ENCODE measurements at regions of chr17 and their contacts with region 1.

Region 1: DNA sequence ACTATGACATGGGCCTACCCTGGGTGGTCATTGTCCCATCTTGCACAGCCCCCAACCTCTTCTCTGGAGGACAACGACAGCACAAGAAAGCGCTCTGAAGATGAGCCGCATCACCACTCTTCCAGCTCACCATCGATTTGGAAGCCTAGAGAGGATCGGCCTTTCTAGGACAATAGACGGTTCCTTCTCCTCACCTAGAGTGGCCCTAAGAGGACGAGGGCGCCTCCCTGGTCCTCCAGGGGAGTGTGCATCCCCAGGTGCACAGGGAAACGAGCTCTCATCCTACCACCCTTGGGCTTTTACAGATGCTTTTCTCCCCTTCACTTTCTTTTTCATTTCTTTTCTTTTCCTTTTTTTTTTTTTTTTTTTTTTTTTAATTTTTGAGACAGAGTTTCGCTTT is 20.3 kb upstream of the SLC52A1 start:
- DNase-seq: no peak
- ATAC-seq: no peak
- H3K4me3 ChIP-seq: no peak overlapping the region
- H3K27ac ChIP-seq: no peak overlapping the region
- H3K4me1 ChIP-seq: no peaks in the 10 kb centered on the region
- H3K27me3 ChIP-seq: peaks cover 0 to 3% (median 0%) of the 10 kb centered on the region in 9 donors
- CTCF ChIP-seq: no peak
- POLR2A ChIP-seq: no peak

Region 2: DNA sequence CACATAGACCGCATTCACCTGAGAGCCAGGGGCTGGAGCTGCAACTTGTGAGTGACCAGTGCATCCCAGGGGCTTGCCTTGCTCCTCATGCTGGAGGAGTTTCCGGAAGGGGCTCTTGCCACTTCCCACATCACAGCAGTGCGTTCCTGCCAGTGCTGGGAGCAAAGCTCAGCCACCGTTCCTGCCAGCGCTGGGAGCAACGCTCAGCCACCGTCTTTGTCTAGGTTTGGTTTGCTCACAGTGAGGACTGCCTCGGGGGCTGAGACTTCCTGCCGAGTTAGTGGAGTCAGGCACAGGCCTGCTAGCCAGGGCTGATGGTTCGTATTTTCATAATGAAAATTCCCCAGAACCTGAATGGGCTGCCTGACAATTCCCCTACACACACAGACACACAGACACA is 147.2 kb before region 1 on chr17:
- intact Hi-C with region 1: loop called in 5 of 10 experiments (anchors 5 to 10 kb)
- DNase-seq: no peak
- ATAC-seq: peak in 2 of 4 donors; percentile 41 to 48
- H3K4me3 ChIP-seq: no peak overlapping the region
- H3K27ac ChIP-seq: peak overlapping the region in 9 of 12 donors; percentile 1 to 75 (median 60)
- H3K4me1 ChIP-seq: peaks cover 0 to 20% (median 10%) of the 10 kb centered on the region in 12 donors
- H3K27me3 ChIP-seq: no peaks in the 10 kb centered on the region
- CTCF ChIP-seq: no peak
- POLR2A ChIP-seq: no peak

Region 3: GRCh38 chr17:4950075-4950745 is 105.3 kb before region 1 on chr17:
- intact Hi-C with region 1: no loop called
- DNase-seq: peak; percentile 75 to 91 (median 84)
- ATAC-seq: peak in 3 of 4 donors; percentile 10 to 52 (median 36)
- H3K4me3 ChIP-seq: peak overlapping the region; percentile 42 to 100 (median 98)
- H3K27ac ChIP-seq: peak overlapping the region; percentile 96 to 100 (median 99)
- H3K4me1 ChIP-seq: peaks cover 7 to 69% (median 34%) of the 10 kb centered on the region in 12 donors
- H3K27me3 ChIP-seq: no peaks in the 10 kb centered on the region
- CTCF ChIP-seq: no peak
- POLR2A ChIP-seq: peak in 1 of 2 donors; percentile 3

Region 4: DNA sequence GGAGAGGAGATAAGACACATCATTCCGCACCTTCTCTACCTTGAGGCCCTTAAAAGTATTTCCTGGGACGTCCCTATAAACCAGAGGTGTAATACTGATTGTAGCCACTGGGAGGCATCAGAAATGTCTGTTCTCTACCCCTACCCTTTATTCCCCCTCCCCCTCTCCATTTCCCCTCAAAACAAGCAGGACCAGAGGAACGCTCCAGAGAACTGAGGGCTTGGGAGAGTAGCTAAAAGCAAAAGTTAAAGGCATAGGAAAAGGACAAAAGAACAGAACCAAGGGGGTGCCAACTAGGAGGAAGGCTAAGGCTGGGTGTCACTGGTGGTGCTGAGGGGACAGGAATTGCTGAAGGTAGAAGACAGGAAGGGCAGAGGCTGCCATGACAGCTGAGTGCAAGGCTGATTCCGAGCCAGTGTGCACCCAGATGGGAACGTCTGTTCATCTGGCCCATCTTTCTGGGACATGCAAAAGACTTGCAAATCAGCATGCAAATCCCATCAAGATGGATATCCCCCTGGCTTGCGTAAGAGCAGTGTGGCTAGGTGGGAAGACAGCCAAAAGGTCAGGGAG is 74.8 kb before region 1 on chr17:
- intact Hi-C with region 1: loop called in 7 of 10 experiments (anchors 5 kb)
- DNase-seq: no peak
- ATAC-seq: peak in 3 of 4 donors; percentile 48 to 59 (median 53)
- H3K4me3 ChIP-seq: no peak overlapping the region
- H3K27ac ChIP-seq: no peak overlapping the region
- H3K4me1 ChIP-seq: peaks cover 0 to 43% (median 1%) of the 10 kb centered on the region in 12 donors
- H3K27me3 ChIP-seq: no peaks in the 10 kb centered on the region
- CTCF ChIP-seq: peak; percentile 62 to 77 (median 68)
- POLR2A ChIP-seq: no peak

Region 5: GRCh38 chr17:5023588-5024147 is 31.9 kb before region 1 on chr17:
- intact Hi-C with region 1: loop called in 1 of 10 experiments (anchors 5 kb)
- DNase-seq: no peak
- ATAC-seq: peak in 2 of 4 donors; percentile 9 to 20
- H3K4me3 ChIP-seq: no peak overlapping the region
- H3K27ac ChIP-seq: no peak overlapping the region
- H3K4me1 ChIP-seq: peaks cover 0 to 10% (median 0%) of the 10 kb centered on the region in 12 donors
- H3K27me3 ChIP-seq: no peaks in the 10 kb centered on the region
- CTCF ChIP-seq: no peak
- POLR2A ChIP-seq: no peak

Measured in heart left ventricle (tissue), 16 donors.